ENCODE measurements at regions of chr1 and their contacts with region 1.

Region 1: GRCh38 chr1:171566467-171566866 is 55.6 kb upstream of the MYOCOS start:
- DNase-seq: no peak
- ATAC-seq: no peak
- H3K4me3 ChIP-seq: no peak overlapping the region
- H3K27ac ChIP-seq: no peak overlapping the region
- H3K4me1 ChIP-seq: no peaks in the 10 kb centered on the region
- H3K27me3 ChIP-seq: no peaks in the 10 kb centered on the region
- CTCF ChIP-seq: peak in 2 of 3 experiments; percentile 5 to 28; a peak in 2 of 6 replicates
- EP300 ChIP-seq: no peak
- POLR2A ChIP-seq: no peak
- RAD21 ChIP-seq: no peak

Region 2: GRCh38 chr1:171220581-171221054 is 345.8 kb before region 1 on chr1:
- CTCF ChIA-PET with region 1: no interaction called
- POLR2A ChIA-PET with region 1: no interaction called
- RAD21 ChIA-PET with region 1: no interaction called
- SMC1A ChIA-PET with region 1: no interaction called
- in situ Hi-C with region 1: no loop called
- intact Hi-C with region 1: no loop called
- DNase-seq: no peak
- ATAC-seq: no peak
- H3K4me3 ChIP-seq: no peak overlapping the region
- H3K27ac ChIP-seq: no peak overlapping the region
- H3K4me1 ChIP-seq: no peaks in the 10 kb centered on the region
- H3K27me3 ChIP-seq: no peaks in the 10 kb centered on the region
- CTCF ChIP-seq: no peak
- EP300 ChIP-seq: no peak
- POLR2A ChIP-seq: no peak
- RAD21 ChIP-seq: no peak

Region 3: DNA sequence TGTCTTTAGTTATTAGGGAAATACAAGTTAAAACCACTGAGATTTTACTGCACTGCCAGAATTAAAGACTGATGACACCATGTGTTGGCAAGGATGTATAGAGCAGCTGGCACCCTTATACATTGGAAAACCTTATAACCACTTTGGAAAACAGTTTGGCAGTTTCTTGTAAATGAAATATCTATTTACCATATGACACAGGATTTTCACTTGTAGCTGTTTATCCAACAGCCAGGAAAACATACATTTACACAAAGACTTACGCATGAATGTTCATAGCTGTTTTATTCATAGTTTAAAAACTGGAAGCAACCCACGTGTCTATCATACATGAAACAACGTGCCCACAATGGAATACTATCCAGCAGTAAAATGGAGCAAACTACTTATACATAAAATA is 35.8 kb before region 1 on chr1:
- CTCF ChIA-PET with region 1: no interaction called
- POLR2A ChIA-PET with region 1: no interaction called
- RAD21 ChIA-PET with region 1: no interaction called
- SMC1A ChIA-PET with region 1: interaction called, 5 read pairs
- in situ Hi-C with region 1: no loop called
- intact Hi-C with region 1: loop called (anchors 5 kb)
- DNase-seq: no peak
- ATAC-seq: no peak
- H3K4me3 ChIP-seq: no peak overlapping the region
- H3K27ac ChIP-seq: no peak overlapping the region
- H3K4me1 ChIP-seq: no peaks in the 10 kb centered on the region
- H3K27me3 ChIP-seq: no peaks in the 10 kb centered on the region
- CTCF ChIP-seq: no peak
- EP300 ChIP-seq: no peak
- POLR2A ChIP-seq: no peak
- RAD21 ChIP-seq: no peak

Region 4: DNA sequence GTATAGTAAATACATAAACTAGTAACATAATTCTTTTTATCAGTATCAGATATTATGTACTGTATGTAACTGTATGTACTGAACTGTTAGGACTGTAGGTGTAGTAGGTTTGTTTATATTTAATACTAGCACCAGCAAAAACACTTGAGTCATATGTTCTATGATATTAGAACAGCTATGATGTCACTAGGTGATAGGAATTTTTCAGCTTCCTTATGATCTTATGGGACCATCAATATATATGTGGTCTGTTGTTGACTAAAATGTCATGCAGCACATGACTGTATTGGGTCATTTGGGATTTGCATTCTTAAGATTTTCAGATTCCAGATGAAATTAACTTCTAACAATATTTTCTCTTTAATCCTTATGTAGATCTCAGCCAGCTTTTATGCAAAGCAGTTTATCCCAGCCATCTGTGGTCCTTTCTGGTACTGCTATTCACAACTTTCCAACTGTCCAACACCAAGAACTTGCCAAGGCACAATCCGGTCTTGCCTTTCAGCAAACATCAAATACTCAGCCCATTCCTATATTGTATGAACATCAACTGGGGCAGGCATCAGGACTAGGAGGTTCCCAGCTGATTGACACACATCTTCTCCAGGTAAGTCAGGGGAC is 17.2 kb after region 1 on chr1:
- CTCF ChIA-PET with region 1: interaction called, 7 read pairs
- POLR2A ChIA-PET with region 1: no interaction called
- RAD21 ChIA-PET with region 1: interaction called, 4 read pairs
- SMC1A ChIA-PET with region 1: interaction called, 4 read pairs
- in situ Hi-C with region 1: no loop called
- intact Hi-C with region 1: loop called (anchors 2 kb)
- DNase-seq: no peak
- ATAC-seq: no peak
- H3K4me3 ChIP-seq: no peak overlapping the region
- H3K27ac ChIP-seq: no peak overlapping the region
- H3K4me1 ChIP-seq: no peaks in the 10 kb centered on the region
- H3K27me3 ChIP-seq: no peaks in the 10 kb centered on the region
- CTCF ChIP-seq: no peak
- EP300 ChIP-seq: no peak
- POLR2A ChIP-seq: no peak
- RAD21 ChIP-seq: no peak

Region 5: GRCh38 chr1:171654942-171655745 is 88.7 kb after region 1 on chr1:
- CTCF ChIA-PET with region 1: interaction called, 3 read pairs
- POLR2A ChIA-PET with region 1: no interaction called
- RAD21 ChIA-PET with region 1: no interaction called
- SMC1A ChIA-PET with region 1: interaction called, 10 read pairs
- in situ Hi-C with region 1: no loop called
- intact Hi-C with region 1: no loop called
- DNase-seq: no peak
- ATAC-seq: peak; percentile 97
- H3K4me3 ChIP-seq: no peak overlapping the region
- H3K27ac ChIP-seq: no peak overlapping the region
- H3K4me1 ChIP-seq: no peaks in the 10 kb centered on the region
- H3K27me3 ChIP-seq: peaks cover 0 to 3% of the 10 kb centered on the region in 2 experiments; a peak in 1 of 4 replicates
- CTCF ChIP-seq: peak; percentile 62 to 89 (median 86)
- EP300 ChIP-seq: no peak
- POLR2A ChIP-seq: no peak
- RAD21 ChIP-seq: peak; percentile 62

Region 6: GRCh38 chr1:171715813-171716251 is 149.4 kb after region 1 on chr1:
- CTCF ChIA-PET with region 1: interaction called, 15 read pairs
- POLR2A ChIA-PET with region 1: no interaction called
- RAD21 ChIA-PET with region 1: interaction called, 4 read pairs
- SMC1A ChIA-PET with region 1: interaction called, 18 read pairs
- in situ Hi-C with region 1: no loop called
- intact Hi-C with region 1: loop called (anchors 5 kb)
- DNase-seq: no peak
- ATAC-seq: peak; percentile 63
- H3K4me3 ChIP-seq: no peak overlapping the region
- H3K27ac ChIP-seq: no peak overlapping the region
- H3K4me1 ChIP-seq: no peaks in the 10 kb centered on the region
- H3K27me3 ChIP-seq: no peaks in the 10 kb centered on the region
- CTCF ChIP-seq: peak; percentile 21 to 43 (median 27); a peak in 2 of 6 replicates
- EP300 ChIP-seq: no peak
- POLR2A ChIP-seq: no peak
- RAD21 ChIP-seq: no peak